CD8-positive, alpha-beta T cell (primary cell): ENCODE measurements at regions of chr5 and their contacts with region 1.

Region 1: GRCh38 chr5:40437452-40437861 is 242.3 kb upstream of the PTGER4 start:
- DNase-seq: peak in 6 of 9 experiments; percentile 17 to 85 (median 32)
- ATAC-seq: peak; percentile 20
- H3K4me3 ChIP-seq: no peak overlapping the region
- H3K4me3 Mint-ChIP-seq: no peak overlapping the region
- H3K27ac ChIP-seq: peak overlapping the region; percentile 51 to 91
- H3K27ac Mint-ChIP-seq: peak overlapping the region; percentile 86
- H3K4me1 ChIP-seq: peaks cover 40% of the 10 kb centered on the region
- H3K4me1 Mint-ChIP-seq: peaks cover 67% of the 10 kb centered on the region
- H3K27me3 ChIP-seq: no peaks in the 10 kb centered on the region
- H3K27me3 Mint-ChIP-seq: no peaks in the 10 kb centered on the region
- CTCF ChIP-seq: no peak

Region 2: GRCh38 chr5:40477856-40478546 is 40.5 kb after region 1 on chr5:
- CTCF ChIA-PET with region 1: no interaction called
- POLR2A ChIA-PET with region 1: no interaction called
- intact Hi-C with region 1: loop called in 1 of 2 experiments (anchors 5 kb)
- DNase-seq: no peak
- ATAC-seq: no peak
- H3K4me3 ChIP-seq: no peak overlapping the region
- H3K4me3 Mint-ChIP-seq: no peak overlapping the region
- H3K27ac ChIP-seq: no peak overlapping the region
- H3K27ac Mint-ChIP-seq: no peak overlapping the region
- H3K4me1 ChIP-seq: no peaks in the 10 kb centered on the region
- H3K4me1 Mint-ChIP-seq: peaks cover 7% of the 10 kb centered on the region
- H3K27me3 ChIP-seq: no peaks in the 10 kb centered on the region
- H3K27me3 Mint-ChIP-seq: no peaks in the 10 kb centered on the region
- CTCF ChIP-seq: no peak

Region 3: DNA sequence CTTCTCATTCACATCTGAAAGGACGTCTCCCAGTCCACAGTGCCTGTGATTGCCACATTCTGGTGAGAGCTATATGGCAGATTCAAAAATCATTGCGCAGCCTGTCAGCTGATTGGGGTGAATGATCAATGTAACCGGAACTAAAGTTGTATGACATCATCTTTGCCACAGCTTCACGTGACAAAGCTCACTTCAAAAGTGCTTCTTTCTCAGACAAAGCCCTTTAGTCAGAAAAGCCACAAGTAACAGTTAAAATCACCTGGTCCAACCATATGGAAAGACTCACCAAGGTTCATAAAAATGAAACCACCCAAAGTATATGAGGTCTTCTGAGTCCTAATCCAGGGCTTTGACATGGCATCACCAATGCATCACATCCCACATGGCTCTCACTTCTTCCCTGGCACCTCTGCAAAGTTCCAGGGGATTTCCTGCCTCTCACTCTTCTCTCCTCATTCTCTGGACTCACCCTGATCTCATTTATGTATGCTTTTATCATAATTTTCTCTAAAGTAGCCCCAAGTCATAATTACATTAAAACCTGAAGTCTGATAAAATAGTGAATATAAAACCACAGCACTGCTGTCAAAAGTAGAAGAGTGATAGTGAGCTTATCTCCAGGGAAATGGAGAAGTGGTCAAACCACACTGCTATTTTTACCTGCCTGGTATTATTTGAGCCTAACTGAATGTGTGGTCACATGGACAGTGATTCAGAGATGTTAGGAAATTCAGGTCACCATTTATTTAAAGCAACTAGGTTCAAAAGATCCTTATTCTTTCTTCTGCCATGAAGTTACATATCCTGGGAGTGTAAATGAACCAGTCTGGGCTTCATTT is 49.2 kb after region 1 on chr5:
- CTCF ChIA-PET with region 1: no interaction called
- POLR2A ChIA-PET with region 1: no interaction called
- intact Hi-C with region 1: loop called in 1 of 2 experiments (anchors 5 kb)
- DNase-seq: peak in 8 of 9 experiments; percentile 7 to 87 (median 42)
- ATAC-seq: peak; percentile 85
- H3K4me3 ChIP-seq: no peak overlapping the region
- H3K4me3 Mint-ChIP-seq: peak overlapping the region; percentile 15
- H3K27ac ChIP-seq: peak overlapping the region in 1 of 2 experiments; percentile 22
- H3K27ac Mint-ChIP-seq: peak overlapping the region; percentile 86
- H3K4me1 ChIP-seq: peaks cover 12% of the 10 kb centered on the region
- H3K4me1 Mint-ChIP-seq: peaks cover 31% of the 10 kb centered on the region
- H3K27me3 ChIP-seq: no peaks in the 10 kb centered on the region
- H3K27me3 Mint-ChIP-seq: no peaks in the 10 kb centered on the region
- CTCF ChIP-seq: no peak

Region 4: DNA sequence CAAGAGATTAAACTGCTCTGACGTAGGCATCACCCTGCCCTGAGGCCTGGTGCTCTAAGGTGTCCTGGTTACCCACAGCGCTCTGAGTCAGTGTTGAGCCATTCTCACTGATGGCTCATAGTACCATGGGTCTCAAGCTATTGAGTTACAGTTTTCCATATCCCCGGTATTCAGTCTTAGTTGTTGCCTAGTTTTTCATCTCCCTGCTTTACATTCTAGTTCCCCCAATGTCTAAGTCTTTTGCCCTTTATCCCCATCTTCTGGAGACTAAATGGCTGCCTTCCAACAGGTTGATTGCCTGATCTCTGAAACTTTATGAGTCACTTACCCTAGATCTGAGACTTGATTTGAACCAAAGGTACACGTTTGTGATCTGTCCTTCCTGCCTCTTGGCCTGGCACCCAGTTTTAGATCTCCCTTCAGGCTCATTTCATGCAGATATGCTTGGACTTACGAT is 81.1 kb after region 1 on chr5:
- CTCF ChIA-PET with region 1: no interaction called
- POLR2A ChIA-PET with region 1: no interaction called
- intact Hi-C with region 1: no loop called
- DNase-seq: no peak
- ATAC-seq: no peak
- H3K4me3 ChIP-seq: no peak overlapping the region
- H3K4me3 Mint-ChIP-seq: no peak overlapping the region
- H3K27ac ChIP-seq: no peak overlapping the region
- H3K27ac Mint-ChIP-seq: no peak overlapping the region
- H3K4me1 ChIP-seq: peaks cover 17% of the 10 kb centered on the region
- H3K4me1 Mint-ChIP-seq: peaks cover 27% of the 10 kb centered on the region
- H3K27me3 ChIP-seq: no peaks in the 10 kb centered on the region
- H3K27me3 Mint-ChIP-seq: no peaks in the 10 kb centered on the region
- CTCF ChIP-seq: no peak

Region 5: GRCh38 chr5:40605295-40605958 is 168.0 kb after region 1 on chr5:
- CTCF ChIA-PET with region 1: no interaction called
- POLR2A ChIA-PET with region 1: no interaction called
- intact Hi-C with region 1: no loop called
- DNase-seq: peak in 2 of 9 experiments; percentile 16 to 47
- ATAC-seq: peak; percentile 49
- H3K4me3 ChIP-seq: peak overlapping the region in 1 of 2 experiments; percentile 6
- H3K4me3 Mint-ChIP-seq: peak overlapping the region; percentile 63
- H3K27ac ChIP-seq: peak overlapping the region in 1 of 2 experiments; percentile 25
- H3K27ac Mint-ChIP-seq: peak overlapping the region; percentile 72
- H3K4me1 ChIP-seq: peaks cover 13% of the 10 kb centered on the region
- H3K4me1 Mint-ChIP-seq: peaks cover 37% of the 10 kb centered on the region
- H3K27me3 ChIP-seq: no peaks in the 10 kb centered on the region
- H3K27me3 Mint-ChIP-seq: no peaks in the 10 kb centered on the region
- CTCF ChIP-seq: no peak

Region 6: GRCh38 chr5:40798012-40798855 is 360.8 kb after region 1 on chr5 and contains the start of gene PRKAA1:
- CTCF ChIA-PET with region 1: no interaction called
- POLR2A ChIA-PET with region 1: no interaction called
- intact Hi-C with region 1: no loop called
- DNase-seq: peak; percentile 84 to 95 (median 90)
- ATAC-seq: peak; percentile 93
- H3K4me3 ChIP-seq: peak within 1 kb of the TSS; percentile 93 to 99
- H3K4me3 Mint-ChIP-seq: peak within 1 kb of the TSS; percentile 94
- H3K27ac ChIP-seq: peak within 1 kb of the TSS; percentile 90 to 94
- H3K27ac Mint-ChIP-seq: peak within 1 kb of the TSS; percentile 94
- H3K4me1 ChIP-seq: peaks cover 22% of the 10 kb centered on the region
- H3K4me1 Mint-ChIP-seq: peaks cover 47% of the 10 kb centered on the region
- H3K27me3 ChIP-seq: no peaks in the 10 kb centered on the region
- H3K27me3 Mint-ChIP-seq: no peaks in the 10 kb centered on the region
- CTCF ChIP-seq: peak; percentile 65
- total RNA-seq, gene PRKAA1: 113 to 114 TPM